ENCODE measurements at regions of chr15 and their contacts with region 1.

Region 1: DNA sequence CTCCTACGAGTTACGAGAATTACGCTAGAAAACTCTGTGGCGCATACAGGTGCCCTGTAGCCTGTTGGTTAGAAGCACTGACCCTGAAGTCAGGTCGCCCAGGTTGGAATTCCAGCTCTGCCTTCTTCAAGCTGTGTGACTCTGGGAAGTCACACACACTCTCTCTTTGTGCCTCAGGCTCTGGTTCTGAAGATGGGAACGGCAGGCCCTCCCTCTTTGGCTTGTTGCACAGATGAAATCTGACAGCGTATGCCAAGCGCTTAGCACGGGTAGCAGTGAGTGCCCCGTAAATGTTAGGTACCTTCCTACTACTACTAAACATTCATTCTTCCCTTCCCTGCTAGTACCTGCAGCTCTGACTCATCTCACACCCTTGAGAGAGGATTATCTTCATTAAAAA is 139.1 kb downstream of the PGPEP1L start:
- DNase-seq: no peak
- ATAC-seq: no peak

Region 2: DNA sequence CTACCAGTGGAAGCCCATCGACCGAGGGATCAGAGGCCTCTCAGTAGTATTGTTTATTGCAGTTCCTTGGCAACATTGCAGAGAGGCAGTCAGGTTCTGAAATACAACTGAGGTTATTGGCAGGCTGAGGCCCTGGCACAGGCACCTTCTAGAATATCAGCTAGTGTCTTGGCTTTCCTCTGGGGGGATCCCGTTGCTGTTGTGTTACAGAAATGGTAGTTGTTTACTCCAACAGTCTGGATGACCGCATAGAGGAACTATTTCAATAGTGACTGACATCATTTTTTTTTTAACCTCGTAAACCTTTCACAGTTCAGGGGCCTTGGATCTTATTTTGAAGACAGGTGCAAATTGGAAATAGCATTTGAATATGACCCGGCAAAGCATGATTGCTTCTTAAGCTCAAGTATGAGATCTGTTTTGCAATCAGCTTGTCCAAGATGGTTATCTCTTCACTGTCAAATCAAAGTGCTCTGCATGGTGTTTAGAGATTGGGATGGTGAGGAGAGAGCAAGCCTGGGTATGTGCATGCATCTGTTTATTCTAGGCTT is 75.2 kb after region 1 on chr15:
- intact Hi-C with region 1: loop called (anchors 2 kb)
- DNase-seq: no peak
- ATAC-seq: peak; percentile 73